ENCODE measurements at regions of chr17 and their contacts with region 1.

Region 1: GRCh38 chr17:43367737-43368242 is 31.0 kb upstream of the ARL4D start:
- DNase-seq: no peak
- ATAC-seq: peak; percentile 46
- H3K4me3 Mint-ChIP-seq: peak overlapping the region; percentile 88
- H3K27ac Mint-ChIP-seq: peak overlapping the region; percentile 100
- H3K4me1 Mint-ChIP-seq: peaks cover 36% of the 10 kb centered on the region
- H3K27me3 Mint-ChIP-seq: no peaks in the 10 kb centered on the region

Region 2: DNA sequence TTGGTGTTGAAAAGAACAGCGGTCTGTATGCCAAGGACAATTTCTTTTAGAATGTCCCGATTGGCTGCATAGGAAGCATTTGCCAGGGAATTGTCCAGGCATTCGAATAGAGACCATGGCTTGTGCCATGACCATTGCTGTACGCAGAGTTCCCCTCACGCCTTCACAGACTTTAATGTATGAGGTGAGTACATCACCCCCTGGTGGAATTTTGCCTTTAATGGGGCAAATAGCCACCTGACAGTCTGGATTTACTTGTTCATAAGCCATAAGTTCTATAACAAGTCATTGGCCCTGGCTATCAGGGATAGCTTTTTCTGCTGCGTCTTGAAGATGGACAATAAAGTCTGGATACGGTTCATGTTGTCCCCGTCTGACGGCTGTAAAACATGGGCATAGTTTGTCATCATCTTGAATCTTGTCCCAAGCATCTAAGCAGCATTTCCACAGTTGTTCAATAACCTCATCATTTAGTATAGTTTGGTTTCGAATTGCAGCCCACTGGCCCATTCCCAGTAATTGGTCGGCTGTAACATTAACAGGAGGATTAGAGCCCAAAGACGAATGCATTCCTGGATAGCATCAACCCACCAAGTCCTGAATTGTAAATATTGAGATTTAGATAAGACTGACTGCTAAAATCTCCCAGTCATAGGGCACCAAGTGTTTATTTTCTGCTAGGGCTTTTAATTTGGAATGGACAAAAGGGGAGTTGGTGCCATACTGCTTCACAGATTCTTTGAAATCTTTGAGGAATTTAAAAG is 36.7 kb before region 1 on chr17:
- POLR2A ChIA-PET with region 1: interaction called, 11 read pairs
- DNase-seq: no peak
- ATAC-seq: no peak
- H3K4me3 Mint-ChIP-seq: no peak overlapping the region
- H3K27ac Mint-ChIP-seq: no peak overlapping the region
- H3K4me1 Mint-ChIP-seq: peaks cover 8% of the 10 kb centered on the region
- H3K27me3 Mint-ChIP-seq: peaks cover 21% of the 10 kb centered on the region

Region 3: DNA sequence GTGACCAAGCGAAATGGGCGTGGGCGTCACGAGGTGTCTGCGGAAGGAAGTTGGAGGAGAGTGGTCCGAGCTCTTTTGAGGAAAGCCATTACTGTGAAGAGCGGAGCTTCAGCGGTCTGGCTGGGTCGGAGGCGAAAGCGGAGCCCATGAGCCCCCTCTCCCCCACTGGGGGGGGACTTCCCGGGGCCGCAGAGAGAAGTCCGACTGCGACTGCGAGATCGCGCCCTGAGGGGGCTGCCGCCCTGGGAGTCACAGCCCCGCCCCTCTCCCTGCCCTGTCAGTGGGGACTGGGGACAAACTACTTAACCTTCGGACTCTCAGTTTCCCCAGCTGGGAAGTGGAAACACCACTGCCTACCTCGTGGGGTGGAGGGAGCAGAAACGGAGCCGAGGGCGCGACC is 11.0 kb after region 1 on chr17:
- POLR2A ChIA-PET with region 1: interaction called, 20 read pairs
- DNase-seq: no peak
- ATAC-seq: no peak
- H3K4me3 Mint-ChIP-seq: no peak overlapping the region
- H3K27ac Mint-ChIP-seq: no peak overlapping the region
- H3K4me1 Mint-ChIP-seq: no peaks in the 10 kb centered on the region
- H3K27me3 Mint-ChIP-seq: no peaks in the 10 kb centered on the region

Region 4: GRCh38 chr17:43483674-43484372 is 116.0 kb after region 1 on chr17 and contains the start of gene DHX8:
- POLR2A ChIA-PET with region 1: interaction called, 88 read pairs
- DNase-seq: peak; percentile 99
- ATAC-seq: peak; percentile 98
- H3K4me3 Mint-ChIP-seq: peak within 1 kb of the TSS; percentile 88
- H3K27ac Mint-ChIP-seq: peak within 1 kb of the TSS; percentile 90
- H3K4me1 Mint-ChIP-seq: peaks cover 16% of the 10 kb centered on the region
- H3K27me3 Mint-ChIP-seq: peaks cover 3% of the 10 kb centered on the region
- total RNA-seq, gene DHX8: 60.6 to 62.9 TPM

Measured in activated naive CD8-positive, alpha-beta T cell treated with anti-CD3 and anti-CD28 coated beads, Interleukin-2, amount 10 ng/mL, durations not matched to agents 7 days and 5 days (primary cell).